AG04450 (cell line): ENCODE measurements at regions of chr12 and their contacts with region 1.

Region 1: GRCh38 chr12:114476159-114476558 is 70.2 kb upstream of the TBX5 start:
- DNase-seq: peak; percentile 11
- H3K4me3 ChIP-seq: no peak overlapping the region
- H3K27ac ChIP-seq: no peak overlapping the region
- H3K27me3 ChIP-seq: peaks cover 48% of the 10 kb centered on the region
- CTCF ChIP-seq: peak; percentile 63

Region 2: GRCh38 chr12:113926788-113927187 is 549.4 kb before region 1 on chr12:
- CTCF ChIA-PET with region 1: interaction called, 16 read pairs
- POLR2A ChIA-PET with region 1: no interaction called
- DNase-seq: no peak
- H3K4me3 ChIP-seq: no peak overlapping the region
- H3K27ac ChIP-seq: no peak overlapping the region
- H3K27me3 ChIP-seq: no peaks in the 10 kb centered on the region
- CTCF ChIP-seq: no peak

Region 3: GRCh38 chr12:115199831-115200230 is 723.7 kb after region 1 on chr12:
- CTCF ChIA-PET with region 1: no interaction called
- POLR2A ChIA-PET with region 1: no interaction called
- DNase-seq: peak; percentile 42
- H3K4me3 ChIP-seq: no peak overlapping the region
- H3K27ac ChIP-seq: no peak overlapping the region
- H3K27me3 ChIP-seq: no peaks in the 10 kb centered on the region
- CTCF ChIP-seq: no peak